Activated T-helper 2 cell treated with anti-CD3 and anti-CD28 coated beads, Interferon-gamma antibody, Interleukin-2, Interleukin-4, amounts not matched to agents 10 μg/mL and 5 μg/mL and 100 μg/mL, durations not matched to agents 14 hours and 24 hours and 36 hours (primary cell): ENCODE measurements at regions of chr7 and their contacts with region 1.

Region 1: GRCh38 chr7:66591799-66592596 is 36.7 kb upstream of the KCTD7 start:
- DNase-seq: peak; percentile 85
- H3K4me3 Mint-ChIP-seq: peak overlapping the region; percentile 96
- H3K27ac Mint-ChIP-seq: peak overlapping the region; percentile 85
- H3K4me1 Mint-ChIP-seq: peaks cover 30% of the 10 kb centered on the region
- H3K27me3 Mint-ChIP-seq: no peaks in the 10 kb centered on the region

Region 2: DNA sequence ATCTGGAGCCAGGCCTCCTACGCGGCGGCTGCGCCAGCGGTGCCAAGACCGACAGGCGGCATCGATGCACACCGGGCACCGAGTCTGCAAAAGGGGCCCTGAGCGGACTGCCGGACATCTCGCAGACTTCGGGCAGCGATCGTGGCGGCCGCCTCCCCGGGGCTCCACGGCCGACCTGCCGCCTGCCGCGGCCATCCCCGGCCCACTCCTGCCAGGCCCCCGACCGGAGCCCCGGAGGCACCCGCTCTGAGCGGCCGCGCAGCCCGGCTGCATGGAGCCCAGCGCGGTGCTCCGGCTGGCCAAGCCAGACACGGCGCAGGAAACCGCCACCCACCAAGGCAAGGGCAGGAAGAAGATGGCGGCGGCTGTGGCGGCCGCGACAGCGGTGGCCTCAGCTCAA is 117.6 kb before region 1 on chr7:
- intact Hi-C with region 1: no loop called
- DNase-seq: no peak
- H3K4me3 Mint-ChIP-seq: no peak overlapping the region
- H3K27ac Mint-ChIP-seq: no peak overlapping the region
- H3K4me1 Mint-ChIP-seq: no peaks in the 10 kb centered on the region
- H3K27me3 Mint-ChIP-seq: no peaks in the 10 kb centered on the region

Region 3: GRCh38 chr7:66654123-66654732 is 62.2 kb after region 1 on chr7:
- intact Hi-C with region 1: loop called (anchors 1 kb)
- DNase-seq: peak; percentile 96
- H3K4me3 Mint-ChIP-seq: peak overlapping the region; percentile 95
- H3K27ac Mint-ChIP-seq: peak overlapping the region; percentile 94
- H3K4me1 Mint-ChIP-seq: peaks cover 14% of the 10 kb centered on the region
- H3K27me3 Mint-ChIP-seq: no peaks in the 10 kb centered on the region

Region 4: GRCh38 chr7:66669088-66669487 is 77.1 kb after region 1 on chr7:
- intact Hi-C with region 1: no loop called
- DNase-seq: no peak
- H3K4me3 Mint-ChIP-seq: no peak overlapping the region
- H3K27ac Mint-ChIP-seq: no peak overlapping the region
- H3K4me1 Mint-ChIP-seq: peaks cover 8% of the 10 kb centered on the region
- H3K27me3 Mint-ChIP-seq: no peaks in the 10 kb centered on the region

Region 5: GRCh38 chr7:66681491-66682349 is 89.7 kb after region 1 on chr7:
- intact Hi-C with region 1: loop called (anchors 1 kb)
- DNase-seq: peak; percentile 91
- H3K4me3 Mint-ChIP-seq: peak overlapping the region; percentile 90
- H3K27ac Mint-ChIP-seq: peak overlapping the region; percentile 93
- H3K4me1 Mint-ChIP-seq: peaks cover 15% of the 10 kb centered on the region
- H3K27me3 Mint-ChIP-seq: no peaks in the 10 kb centered on the region